H1 (cell line): ENCODE measurements at regions of chr14 and their contacts with region 1.

Region 1: DNA sequence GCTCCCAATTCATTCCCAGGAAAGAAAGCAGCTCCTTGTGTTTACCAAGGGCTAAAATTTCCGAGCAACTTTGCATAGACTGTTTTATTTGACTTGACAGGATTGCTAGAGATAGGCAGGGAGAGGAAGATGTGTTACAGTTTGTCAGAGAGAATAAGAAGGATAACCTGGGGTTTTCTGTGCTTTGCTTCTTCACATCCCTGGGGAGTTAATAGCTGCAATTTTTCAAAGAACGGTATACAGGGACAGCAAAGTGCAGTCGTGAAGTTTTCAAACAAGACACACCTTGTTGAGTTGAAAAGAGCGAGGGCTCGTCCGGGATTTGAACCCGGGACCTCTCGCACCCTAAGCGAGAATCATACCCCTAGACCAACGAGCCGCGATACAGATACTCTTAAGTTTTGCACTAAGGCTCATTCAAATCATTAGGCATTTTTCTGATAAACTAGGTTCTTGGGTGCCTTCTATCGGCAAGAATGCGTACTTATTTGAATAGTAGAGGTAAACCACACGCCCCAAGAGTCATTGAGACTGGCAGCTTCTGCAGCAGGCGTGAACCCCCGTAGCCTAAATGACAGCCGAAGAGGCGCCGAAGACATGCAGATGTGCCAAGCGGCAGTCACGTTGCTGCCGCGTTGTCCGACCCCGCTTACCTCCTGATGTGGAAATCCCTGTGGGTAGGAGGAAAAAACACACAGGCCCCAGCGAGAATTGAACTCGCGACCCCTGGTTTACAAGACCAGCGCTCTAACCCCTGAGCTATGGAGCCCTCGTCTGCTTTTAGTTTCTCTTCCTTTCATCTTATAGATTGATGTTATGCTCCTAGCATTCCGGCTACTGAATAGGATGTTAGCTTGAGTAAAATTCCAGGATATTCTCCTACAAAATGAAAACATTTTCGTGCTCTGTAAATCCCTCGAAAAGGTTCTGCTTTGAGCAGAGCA is 22.2 kb upstream of the RNASE12 start:
- DNase-seq: peak; percentile 91 to 93
- H3K4me3 ChIP-seq: peak overlapping the region; percentile 60 to 98 (median 95)
- H3K27ac ChIP-seq: no peak overlapping the region
- H3K4me1 ChIP-seq: peaks cover 0 to 2% (median 0%) of the 10 kb centered on the region in 4 experiments; a peak in 2 of 7 replicates
- H3K27me3 ChIP-seq: no peaks in the 10 kb centered on the region
- CTCF ChIP-seq: peak; percentile 13 to 78 (median 42); a peak in 3 of 4 replicates
- EP300 ChIP-seq: no peak
- POLR2A ChIP-seq: no peak
- RAD21 ChIP-seq: no peak; a peak in 1 of 4 replicates

Region 2: GRCh38 chr14:20461274-20462001 is 151.9 kb before region 1 on chr14 and contains the start of gene PIP4P1:
- CTCF ChIA-PET with region 1: interaction called, 19 read pairs
- POLR2A ChIA-PET with region 1: interaction called, 5 read pairs
- DNase-seq: peak; percentile 94 to 100
- H3K4me3 ChIP-seq: peak within 1 kb of the TSS; percentile 71 to 87 (median 78)
- H3K27ac ChIP-seq: peak within 1 kb of the TSS; percentile 85
- H3K4me1 ChIP-seq: peaks cover 0 to 7% (median 2%) of the 10 kb centered on the region in 4 experiments; a peak in 4 of 7 replicates
- H3K27me3 ChIP-seq: no peaks in the 10 kb centered on the region; a peak in 1 of 7 replicates
- CTCF ChIP-seq: no peak
- EP300 ChIP-seq: no peak
- POLR2A ChIP-seq: peak in 1 of 2 experiments; percentile 19; a peak in 1 of 3 replicates
- RAD21 ChIP-seq: no peak
- total RNA-seq, gene PIP4P1: 29.5 and 33.4 TPM in 2 replicates

Region 3: DNA sequence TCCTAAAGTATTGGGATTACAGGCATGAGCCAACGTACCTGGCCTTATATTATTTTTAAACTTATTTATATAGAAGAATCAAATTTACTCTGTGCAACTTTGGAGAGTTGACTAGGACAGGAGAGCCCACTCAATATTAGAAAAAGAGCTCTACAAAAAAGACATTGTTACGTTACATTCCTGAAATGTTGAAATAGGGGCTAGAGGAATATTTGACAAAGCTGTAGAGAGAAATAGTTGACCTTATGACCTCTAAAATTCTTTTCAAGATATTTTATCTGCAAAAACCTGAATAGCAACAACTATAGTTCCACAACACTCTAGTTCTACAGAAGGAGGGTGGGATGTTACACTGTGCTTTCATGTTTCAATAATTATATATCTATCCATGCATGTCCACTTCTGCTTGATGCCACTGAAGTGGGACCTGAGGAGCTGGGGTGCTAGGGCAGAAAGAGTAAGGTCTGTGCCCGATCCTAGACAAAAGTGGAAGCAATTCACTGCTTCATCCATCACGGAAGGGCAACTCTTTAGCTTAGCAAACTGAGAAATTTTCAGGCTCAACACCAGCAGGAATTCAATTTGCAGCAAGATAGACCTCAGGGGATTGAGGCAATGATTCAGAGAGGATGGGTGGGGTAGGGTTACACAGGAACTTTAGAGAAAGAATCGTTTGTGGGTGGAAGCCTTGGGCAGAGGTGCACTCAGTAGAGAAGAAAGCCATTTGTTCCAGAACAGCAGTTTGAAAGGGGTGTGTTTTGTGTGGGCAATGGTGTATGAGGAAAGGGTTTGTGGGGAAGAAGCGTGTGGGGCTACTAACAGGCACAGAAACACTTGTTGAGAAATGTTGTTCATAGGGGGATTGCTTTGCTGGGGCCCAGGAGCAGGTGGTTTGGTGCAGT is 124.0 kb before region 1 on chr14:
- CTCF ChIA-PET with region 1: interaction called, 114 read pairs
- POLR2A ChIA-PET with region 1: interaction called, 3 read pairs
- DNase-seq: no peak
- H3K4me3 ChIP-seq: no peak overlapping the region
- H3K27ac ChIP-seq: no peak overlapping the region
- H3K4me1 ChIP-seq: peaks cover 0 to 8% (median 3%) of the 10 kb centered on the region in 4 experiments; a peak in 2 of 7 replicates
- H3K27me3 ChIP-seq: no peaks in the 10 kb centered on the region
- CTCF ChIP-seq: no peak
- EP300 ChIP-seq: no peak
- POLR2A ChIP-seq: no peak
- RAD21 ChIP-seq: no peak

Region 4: GRCh38 chr14:20624495-20625070 is 11.2 kb after region 1 on chr14:
- CTCF ChIA-PET with region 1: interaction called, 21 read pairs
- POLR2A ChIA-PET with region 1: no interaction called
- DNase-seq: peak in 1 of 2 experiments; percentile 74
- H3K4me3 ChIP-seq: peak overlapping the region; percentile 64 to 99 (median 82)
- H3K27ac ChIP-seq: no peak overlapping the region
- H3K4me1 ChIP-seq: peaks cover 0 to 10% (median 1%) of the 10 kb centered on the region in 4 experiments; a peak in 2 of 7 replicates
- H3K27me3 ChIP-seq: peaks cover 0 to 24% (median 17%) of the 10 kb centered on the region in 4 experiments; a peak in 6 of 7 replicates
- CTCF ChIP-seq: no peak
- EP300 ChIP-seq: no peak
- POLR2A ChIP-seq: no peak
- RAD21 ChIP-seq: no peak

Region 5: DNA sequence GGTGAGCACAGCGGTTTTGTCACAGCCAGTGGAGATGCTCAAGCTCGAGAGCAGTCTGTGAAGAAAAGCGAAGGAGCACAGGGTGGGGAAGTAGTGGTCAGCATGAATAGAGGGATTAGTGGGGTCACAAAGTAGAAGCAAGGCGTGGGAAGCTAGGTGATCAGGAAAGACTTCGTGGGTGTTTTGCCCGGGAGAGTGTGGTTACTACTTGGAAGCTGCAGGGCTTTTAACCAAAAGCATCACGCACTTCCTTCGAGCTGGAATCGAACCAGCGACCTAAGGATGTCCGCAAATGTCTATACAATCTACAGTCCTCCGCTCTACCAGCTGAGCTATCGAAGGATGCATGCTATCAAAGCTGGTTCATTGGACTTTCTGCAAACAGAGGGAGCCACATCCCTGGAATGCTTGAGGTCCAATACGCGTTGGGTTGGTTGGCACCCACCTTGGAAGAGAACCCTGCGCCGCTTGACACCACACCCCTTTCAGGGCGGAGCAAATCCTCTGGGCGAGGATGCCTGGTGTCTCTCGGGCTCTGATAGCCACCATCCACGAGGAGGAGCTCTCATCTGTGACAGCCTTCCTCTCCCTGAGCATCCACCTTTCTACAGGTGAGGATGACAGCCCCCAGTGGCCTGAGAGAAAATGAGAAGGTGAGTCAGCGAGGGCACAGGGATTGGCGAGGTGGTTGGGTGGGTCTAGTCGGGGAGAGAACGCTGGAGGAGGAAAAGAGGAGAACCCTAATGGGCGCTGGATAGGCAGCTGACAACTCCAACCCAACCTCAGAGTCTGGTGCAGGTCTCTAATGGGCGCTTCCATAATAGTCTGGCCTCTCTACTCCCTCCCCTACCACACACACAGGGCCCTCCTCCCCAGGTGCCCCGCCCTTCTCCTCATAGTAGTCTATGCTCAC is 44.1 kb after region 1 on chr14:
- CTCF ChIA-PET with region 1: interaction called, 18 read pairs
- POLR2A ChIA-PET with region 1: interaction called, 4 read pairs
- DNase-seq: peak; percentile 89 to 92
- H3K4me3 ChIP-seq: peak overlapping the region; percentile 29 to 61 (median 44); a peak in 7 of 8 replicates
- H3K27ac ChIP-seq: no peak overlapping the region
- H3K4me1 ChIP-seq: peaks cover 0 to 5% (median 1%) of the 10 kb centered on the region in 4 experiments; a peak in 2 of 7 replicates
- H3K27me3 ChIP-seq: peaks cover 3 to 18% (median 12%) of the 10 kb centered on the region in 4 experiments; a peak in 6 of 7 replicates
- CTCF ChIP-seq: peak; percentile 78 to 95 (median 95)
- EP300 ChIP-seq: no peak
- POLR2A ChIP-seq: no peak
- RAD21 ChIP-seq: peak; percentile 54 to 57

Region 6: GRCh38 chr14:20667957-20668356 is 54.6 kb after region 1 on chr14:
- CTCF ChIA-PET with region 1: no interaction called
- POLR2A ChIA-PET with region 1: no interaction called
- DNase-seq: no peak
- H3K4me3 ChIP-seq: no peak overlapping the region
- H3K27ac ChIP-seq: no peak overlapping the region
- H3K4me1 ChIP-seq: no peaks in the 10 kb centered on the region; a peak in 2 of 7 replicates
- H3K27me3 ChIP-seq: peaks cover 0 to 3% (median 0%) of the 10 kb centered on the region in 4 experiments; a peak in 1 of 7 replicates
- CTCF ChIP-seq: no peak
- EP300 ChIP-seq: no peak
- POLR2A ChIP-seq: no peak
- RAD21 ChIP-seq: no peak

Region 7: GRCh38 chr14:20989572-20990551 is 376.5 kb after region 1 on chr14 and contains the start of gene METTL17:
- CTCF ChIA-PET with region 1: no interaction called
- POLR2A ChIA-PET with region 1: no interaction called
- DNase-seq: peak; percentile 85 to 89
- H3K4me3 ChIP-seq: peak within 1 kb of the TSS; percentile 65 to 98 (median 96)
- H3K27ac ChIP-seq: peak within 1 kb of the TSS; percentile 34; the same call in 1 of the 2 replicates
- H3K4me1 ChIP-seq: peaks cover 2 to 4% (median 4%) of the 10 kb centered on the region in 4 experiments; a peak in 3 of 7 replicates
- H3K27me3 ChIP-seq: no peaks in the 10 kb centered on the region
- CTCF ChIP-seq: peak; percentile 36 to 60 (median 49); a peak in 3 of 4 replicates
- EP300 ChIP-seq: no peak
- POLR2A ChIP-seq: peak in 1 of 2 experiments; percentile 83; a peak in 2 of 3 replicates
- RAD21 ChIP-seq: peak; percentile 33 to 46
- total RNA-seq, gene METTL17: 73.8 and 75.8 TPM in 2 replicates